Activated CD4-positive, alpha-beta memory T cell treated with anti-CD3 and anti-CD28 coated beads for 36 hours (primary cell): ENCODE measurements at regions of chr6 and their contacts with region 1.

Region 1: DNA sequence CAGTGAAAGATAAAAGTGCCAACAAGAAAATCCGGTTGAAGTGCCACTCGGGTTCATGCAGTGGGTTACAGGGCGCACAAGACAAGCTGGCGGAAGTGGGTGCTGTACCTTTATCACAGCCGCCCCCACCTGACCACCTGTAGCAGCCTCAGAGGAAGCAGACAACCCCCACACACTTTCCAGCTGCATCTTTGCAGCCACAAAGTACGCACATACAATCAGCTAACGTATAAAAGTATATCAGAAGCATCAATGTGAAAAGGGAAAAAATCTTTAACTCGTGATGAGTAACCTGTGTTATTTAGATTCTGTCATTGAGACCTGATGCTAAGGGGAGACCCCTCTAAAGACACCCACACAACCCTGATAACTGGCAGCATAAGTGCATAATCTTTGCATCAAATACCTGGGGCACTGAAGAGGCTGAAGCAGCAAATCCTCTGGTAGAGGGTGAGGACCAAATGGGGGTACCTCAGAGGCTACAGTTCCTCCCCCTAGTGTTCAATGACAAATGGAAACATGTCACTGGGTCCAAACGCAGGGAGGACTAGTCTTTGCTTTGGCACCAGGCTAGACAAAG is 22.1 kb downstream of the BACH2 start:
- DNase-seq: peak; percentile 96
- H3K4me3 Mint-ChIP-seq: peak overlapping the region; percentile 27
- H3K27ac Mint-ChIP-seq: peak overlapping the region; percentile 87
- H3K4me1 Mint-ChIP-seq: peaks cover 86% of the 10 kb centered on the region
- H3K27me3 Mint-ChIP-seq: no peaks in the 10 kb centered on the region

Region 2: DNA sequence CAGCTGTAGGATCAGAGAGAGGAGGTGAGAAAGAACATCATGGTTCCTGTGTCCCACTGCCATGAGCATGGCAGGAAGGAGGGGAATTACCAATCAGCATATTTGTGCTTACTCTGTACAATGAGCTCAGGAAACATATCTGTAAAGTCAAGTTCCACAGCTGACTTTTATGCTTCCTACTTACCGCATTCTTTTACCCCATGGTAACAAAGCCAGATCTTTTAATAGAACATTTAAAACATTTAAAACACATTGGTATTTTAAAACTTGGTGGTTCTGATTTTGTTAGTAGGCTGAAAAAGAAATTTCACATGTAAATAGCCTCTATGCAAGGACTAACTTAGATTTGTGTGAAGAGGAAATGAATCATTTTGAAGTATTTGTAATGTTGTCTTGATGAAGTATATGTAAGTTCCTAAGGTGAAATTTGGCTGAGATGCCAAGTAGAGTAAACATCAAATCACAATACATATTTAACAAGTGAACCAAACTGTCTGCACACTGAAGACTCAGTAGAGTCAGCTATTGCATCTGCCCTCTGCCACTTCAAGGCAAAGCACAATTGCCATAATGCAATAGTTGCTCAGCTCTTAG is 265.5 kb before region 1 on chr6:
- CTCF ChIA-PET with region 1: no interaction called
- POLR2A ChIA-PET with region 1: no interaction called
- intact Hi-C with region 1: loop called (anchors 1 kb)
- DNase-seq: peak; percentile 54
- H3K4me3 Mint-ChIP-seq: peak overlapping the region; percentile 12
- H3K27ac Mint-ChIP-seq: peak overlapping the region; percentile 94
- H3K4me1 Mint-ChIP-seq: peaks cover 48% of the 10 kb centered on the region
- H3K27me3 Mint-ChIP-seq: no peaks in the 10 kb centered on the region

Region 3: DNA sequence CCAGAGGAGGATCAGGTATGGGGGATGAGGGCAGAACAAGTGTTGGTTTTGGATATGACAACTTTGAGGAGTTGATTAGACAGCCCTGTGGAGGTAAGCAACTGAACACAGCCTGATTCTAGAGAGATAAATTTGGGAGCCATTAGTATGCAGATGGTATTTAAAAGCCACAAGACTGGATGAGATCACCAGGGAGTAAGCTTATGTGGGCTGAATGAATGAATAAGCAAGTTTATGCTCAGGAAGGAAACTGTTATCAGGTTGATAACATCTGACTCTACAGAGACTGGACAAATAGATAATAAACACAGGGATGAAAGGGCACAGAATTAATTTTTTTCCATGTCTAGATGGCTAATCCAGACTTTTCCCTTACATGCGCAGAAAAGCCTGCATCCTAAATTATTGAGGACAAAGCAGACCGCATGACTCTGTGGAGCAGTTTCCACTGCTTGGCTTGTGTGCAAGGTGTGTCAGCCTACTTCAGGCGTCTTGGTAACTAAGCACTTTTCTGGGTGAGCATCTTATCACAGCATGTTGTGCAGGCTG is 229.6 kb before region 1 on chr6:
- CTCF ChIA-PET with region 1: no interaction called
- POLR2A ChIA-PET with region 1: no interaction called
- intact Hi-C with region 1: no loop called
- DNase-seq: no peak
- H3K4me3 Mint-ChIP-seq: no peak overlapping the region
- H3K27ac Mint-ChIP-seq: peak overlapping the region; percentile 53
- H3K4me1 Mint-ChIP-seq: peaks cover 32% of the 10 kb centered on the region
- H3K27me3 Mint-ChIP-seq: no peaks in the 10 kb centered on the region

Region 4: DNA sequence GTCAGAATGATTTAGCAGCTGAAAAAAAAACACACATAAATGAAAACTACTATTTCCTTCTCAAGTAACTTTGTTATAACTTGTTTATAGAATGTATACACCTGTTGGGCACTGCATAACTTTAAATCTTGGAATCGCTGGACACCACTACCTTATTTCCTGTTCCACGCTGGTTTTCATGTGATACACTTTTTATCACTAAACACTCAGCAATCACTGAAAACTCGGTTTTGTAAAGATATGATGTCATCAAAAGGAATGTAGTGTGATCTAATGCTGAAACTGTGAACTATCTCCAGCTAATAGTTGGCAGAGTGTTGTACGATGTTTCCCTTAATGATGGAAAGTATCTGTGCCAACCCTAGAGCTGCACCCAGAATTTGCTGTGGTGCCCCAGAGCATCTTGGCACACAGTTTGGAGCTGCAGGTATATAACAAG is 105.8 kb before region 1 on chr6:
- CTCF ChIA-PET with region 1: no interaction called
- POLR2A ChIA-PET with region 1: no interaction called
- intact Hi-C with region 1: no loop called
- DNase-seq: no peak
- H3K4me3 Mint-ChIP-seq: no peak overlapping the region
- H3K27ac Mint-ChIP-seq: no peak overlapping the region
- H3K4me1 Mint-ChIP-seq: peaks cover 36% of the 10 kb centered on the region
- H3K27me3 Mint-ChIP-seq: no peaks in the 10 kb centered on the region

Region 5: GRCh38 chr6:90216072-90216977 is 58.2 kb before region 1 on chr6:
- CTCF ChIA-PET with region 1: no interaction called
- POLR2A ChIA-PET with region 1: no interaction called
- intact Hi-C with region 1: loop called (anchors 2 kb)
- DNase-seq: peak; percentile 39
- H3K4me3 Mint-ChIP-seq: no peak overlapping the region
- H3K27ac Mint-ChIP-seq: peak overlapping the region; percentile 56
- H3K4me1 Mint-ChIP-seq: peaks cover 27% of the 10 kb centered on the region
- H3K27me3 Mint-ChIP-seq: no peaks in the 10 kb centered on the region

Region 6: DNA sequence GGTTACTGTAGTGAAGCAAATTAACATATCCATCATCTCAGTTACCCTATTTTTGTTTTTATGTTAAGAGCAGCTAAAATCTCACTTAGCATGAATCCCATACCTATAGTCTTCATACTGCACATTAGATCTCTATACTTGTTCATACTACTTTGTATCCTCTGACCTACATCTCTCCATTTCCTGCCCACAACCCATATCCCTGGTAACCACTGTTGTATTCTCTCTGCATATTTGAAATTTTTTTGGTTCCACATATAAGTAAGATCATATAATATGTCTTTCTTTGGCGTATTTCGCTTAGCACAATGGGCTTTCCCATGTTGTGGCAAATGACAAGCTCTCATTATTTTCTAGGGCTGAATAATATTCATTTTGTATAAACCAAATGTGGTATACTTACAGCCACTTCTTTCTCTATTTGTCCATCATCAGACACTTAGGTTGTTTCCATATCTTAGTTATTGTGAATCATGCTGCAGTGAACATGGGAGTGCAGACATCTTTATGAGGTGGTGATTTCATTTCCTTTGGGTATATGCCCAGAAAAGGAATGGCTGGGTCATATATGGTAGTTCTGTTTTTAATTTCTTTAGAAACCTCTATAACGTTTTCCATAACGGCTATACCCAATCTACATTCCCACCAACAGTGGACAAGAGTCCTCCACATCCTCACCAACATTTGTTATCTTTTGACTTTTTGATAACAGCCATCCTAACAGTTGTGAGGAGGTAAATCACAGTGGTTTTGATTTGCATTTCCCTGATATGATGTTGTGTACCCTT is 17.6 kb before region 1 on chr6:
- CTCF ChIA-PET with region 1: interaction called, 3 read pairs
- POLR2A ChIA-PET with region 1: interaction called, 10 read pairs
- intact Hi-C with region 1: loop called (anchors 1 kb)
- DNase-seq: no peak
- H3K4me3 Mint-ChIP-seq: no peak overlapping the region
- H3K27ac Mint-ChIP-seq: peak overlapping the region; percentile 87
- H3K4me1 Mint-ChIP-seq: peaks cover 83% of the 10 kb centered on the region
- H3K27me3 Mint-ChIP-seq: no peaks in the 10 kb centered on the region

Region 7: GRCh38 chr6:90319044-90319443 is 44.5 kb after region 1 on chr6:
- CTCF ChIA-PET with region 1: no interaction called
- POLR2A ChIA-PET with region 1: no interaction called
- intact Hi-C with region 1: loop called (anchors 1 kb)
- DNase-seq: peak; percentile 51
- H3K4me3 Mint-ChIP-seq: no peak overlapping the region
- H3K27ac Mint-ChIP-seq: peak overlapping the region; percentile 59
- H3K4me1 Mint-ChIP-seq: peaks cover 29% of the 10 kb centered on the region
- H3K27me3 Mint-ChIP-seq: peaks cover 3% of the 10 kb centered on the region

Region 8: DNA sequence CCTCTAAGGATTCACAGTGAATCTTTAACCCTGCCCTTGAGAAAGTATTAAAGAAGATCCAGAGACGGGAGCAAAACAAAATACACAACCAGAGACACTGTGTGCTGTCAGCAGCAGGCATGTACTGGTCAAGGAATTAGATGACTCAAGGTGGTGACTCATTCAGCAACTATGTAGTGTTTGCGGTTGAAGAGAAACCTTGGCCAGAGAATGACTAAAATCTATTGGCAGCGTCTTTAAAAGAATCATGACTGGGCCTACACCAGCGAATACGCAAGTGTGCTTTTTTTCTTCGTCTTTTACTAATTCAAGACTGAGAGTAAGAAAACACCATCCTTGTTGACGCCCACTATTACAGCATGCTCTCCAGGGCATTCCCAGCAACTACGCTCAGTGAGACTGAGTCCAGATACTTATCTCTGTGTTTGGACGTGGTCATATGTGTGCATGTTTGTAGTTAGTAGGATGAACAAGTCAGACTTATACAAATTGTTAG is 94.5 kb after region 1 on chr6:
- CTCF ChIA-PET with region 1: no interaction called
- POLR2A ChIA-PET with region 1: no interaction called
- intact Hi-C with region 1: no loop called
- DNase-seq: peak; percentile 63
- H3K4me3 Mint-ChIP-seq: no peak overlapping the region
- H3K27ac Mint-ChIP-seq: peak overlapping the region; percentile 35
- H3K4me1 Mint-ChIP-seq: peaks cover 20% of the 10 kb centered on the region
- H3K27me3 Mint-ChIP-seq: no peaks in the 10 kb centered on the region

Region 9: DNA sequence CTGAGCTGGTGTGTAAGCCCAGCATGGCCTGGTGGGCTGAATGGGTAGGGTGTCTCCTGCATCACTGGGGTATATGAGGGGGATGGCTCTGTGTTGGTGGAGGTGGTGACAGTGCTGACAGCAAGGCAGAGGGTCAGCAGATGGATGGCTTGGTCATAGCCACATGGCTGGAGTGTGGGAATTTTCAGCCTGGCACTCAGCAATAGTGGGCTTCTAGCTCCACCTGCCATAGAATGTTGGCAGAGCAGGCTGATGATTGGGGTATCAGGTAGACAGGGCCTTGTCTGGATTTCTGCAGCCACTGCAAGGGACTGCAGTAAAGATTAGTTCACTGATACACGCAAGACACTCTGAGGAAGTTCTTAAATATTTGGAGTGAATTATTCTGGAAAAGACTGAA is 159.6 kb after region 1 on chr6:
- CTCF ChIA-PET with region 1: no interaction called
- POLR2A ChIA-PET with region 1: no interaction called
- intact Hi-C with region 1: no loop called
- DNase-seq: no peak
- H3K4me3 Mint-ChIP-seq: no peak overlapping the region
- H3K27ac Mint-ChIP-seq: no peak overlapping the region
- H3K4me1 Mint-ChIP-seq: peaks cover 22% of the 10 kb centered on the region
- H3K27me3 Mint-ChIP-seq: no peaks in the 10 kb centered on the region

Region 10: DNA sequence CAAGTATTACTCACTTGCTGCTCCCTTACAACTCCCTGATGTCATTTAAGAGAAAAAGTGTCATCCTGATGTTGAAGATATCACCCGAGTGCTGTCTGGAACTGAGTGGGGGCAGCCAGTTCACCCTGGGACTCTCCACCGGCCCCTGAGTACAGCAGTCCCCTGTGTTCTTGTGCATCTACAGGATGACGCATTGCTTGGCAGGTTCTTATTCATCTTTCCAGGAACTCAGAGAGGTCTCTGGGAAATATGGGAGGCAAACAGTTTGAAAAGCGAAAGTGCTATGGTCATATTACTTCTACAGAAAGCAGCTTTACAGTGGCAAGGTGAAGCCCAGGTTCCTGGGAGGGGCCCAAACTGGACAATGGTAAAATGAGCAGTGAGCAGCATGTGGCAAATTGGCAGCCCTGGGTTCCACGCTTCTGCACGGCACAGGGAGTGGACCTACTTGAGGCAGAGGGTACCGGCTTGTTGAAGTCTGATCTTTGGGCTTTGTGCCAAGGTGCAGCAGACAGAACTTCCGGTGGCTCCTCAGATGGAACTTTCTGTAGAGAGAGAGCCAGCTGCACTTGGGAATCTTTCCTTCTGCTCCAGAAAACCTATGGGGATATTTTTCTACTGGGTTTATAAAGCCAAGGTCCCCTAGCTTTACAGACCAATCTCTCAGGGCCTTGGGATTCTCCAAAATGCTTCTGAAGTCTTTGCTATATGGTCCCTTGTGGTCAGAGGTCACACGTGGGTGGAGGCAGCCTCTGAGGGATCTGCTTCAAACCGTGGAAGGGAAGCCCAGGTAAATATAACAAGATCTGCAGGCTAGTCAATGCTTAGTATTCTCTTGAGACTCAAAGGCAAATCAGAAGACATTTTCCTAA is 184.0 kb after region 1 on chr6:
- CTCF ChIA-PET with region 1: no interaction called
- POLR2A ChIA-PET with region 1: interaction called, 4 read pairs
- intact Hi-C with region 1: loop called (anchors 1 kb)
- DNase-seq: peak; percentile 94
- H3K4me3 Mint-ChIP-seq: peak overlapping the region; percentile 40
- H3K27ac Mint-ChIP-seq: peak overlapping the region; percentile 95
- H3K4me1 Mint-ChIP-seq: peaks cover 87% of the 10 kb centered on the region
- H3K27me3 Mint-ChIP-seq: no peaks in the 10 kb centered on the region